ENCODE measurements at regions of chr3 and their contacts with region 1.

Region 1: GRCh38 chr3:50337191-50337841 is 3.3 kb downstream of the RASSF1 start:
- DNase-seq: peak; percentile 98 to 99 (median 98)
- H3K4me3 ChIP-seq: peak overlapping the region; percentile 50 to 94 (median 83)
- H3K4me3 Mint-ChIP-seq: peak overlapping the region; percentile 79 to 96
- H3K27ac ChIP-seq: peak overlapping the region; percentile 91 to 98
- H3K27ac Mint-ChIP-seq: peak overlapping the region; percentile 92 to 99 (median 96)
- H3K4me1 ChIP-seq: peaks cover 71 to 76% of the 10 kb centered on the region in 2 donors
- H3K4me1 Mint-ChIP-seq: peaks cover 62% of the 10 kb centered on the region
- H3K27me3 ChIP-seq: no peaks in the 10 kb centered on the region
- H3K27me3 Mint-ChIP-seq: no peaks in the 10 kb centered on the region
- CTCF ChIP-seq: no peak

Region 2: DNA sequence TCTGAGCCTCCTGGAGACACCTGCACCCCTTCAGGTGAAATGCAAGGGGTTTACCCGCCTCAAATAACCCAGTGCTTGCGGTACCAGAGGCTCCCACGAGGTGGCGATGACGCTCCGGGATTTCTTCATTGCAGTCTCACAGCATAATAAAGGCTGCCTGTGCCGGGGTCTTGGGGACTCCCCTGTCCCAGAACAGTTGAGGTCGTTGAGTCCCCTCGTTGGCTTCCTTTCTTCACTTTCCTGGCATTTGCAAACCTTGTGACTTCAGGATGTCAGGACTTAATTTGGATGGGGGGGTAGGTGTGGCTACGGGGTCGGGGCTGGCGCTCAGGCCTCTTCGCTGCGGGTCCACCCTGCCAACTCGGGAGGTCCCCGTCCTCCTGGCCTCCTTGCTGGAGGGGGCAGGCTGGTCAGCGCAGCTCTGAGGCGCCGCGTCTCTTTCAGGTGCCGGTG is 144.6 kb before region 1 on chr3:
- intact Hi-C with region 1: no loop called
- DNase-seq: peak; percentile 44 to 70 (median 62)
- H3K4me3 ChIP-seq: no peak overlapping the region
- H3K4me3 Mint-ChIP-seq: peak overlapping the region in 1 of 2 donors; percentile 55
- H3K27ac ChIP-seq: no peak overlapping the region
- H3K27ac Mint-ChIP-seq: peak overlapping the region in 1 of 7 donors; percentile 50
- H3K4me1 ChIP-seq: peaks cover 25 to 37% of the 10 kb centered on the region in 2 donors
- H3K4me1 Mint-ChIP-seq: peaks cover 27% of the 10 kb centered on the region
- H3K27me3 ChIP-seq: peaks cover 15 to 37% of the 10 kb centered on the region in 2 donors
- H3K27me3 Mint-ChIP-seq: peaks cover 36 to 47% (median 44%) of the 10 kb centered on the region in 3 donors
- CTCF ChIP-seq: peak; percentile 97

Region 3: GRCh38 chr3:50298836-50299637 is 38.3 kb before region 1 on chr3 and contains the starts of genes HYAL3 and NAA80:
- intact Hi-C with region 1: loop called (anchors 5 kb)
- DNase-seq: peak; percentile 98 to 100 (median 100)
- H3K4me3 ChIP-seq: peak within 1 kb of the TSS; percentile 40 to 94 (median 84)
- H3K4me3 Mint-ChIP-seq: peak within 1 kb of the TSS; percentile 90 to 95
- H3K27ac ChIP-seq: peak within 1 kb of the TSS; percentile 99 to 100
- H3K27ac Mint-ChIP-seq: peak within 1 kb of the TSS; percentile 99
- H3K4me1 ChIP-seq: peaks cover 32 to 37% of the 10 kb centered on the region in 2 donors
- H3K4me1 Mint-ChIP-seq: peaks cover 34% of the 10 kb centered on the region
- H3K27me3 ChIP-seq: no peaks in the 10 kb centered on the region
- H3K27me3 Mint-ChIP-seq: no peaks in the 10 kb centered on the region
- CTCF ChIP-seq: peak; percentile 63
- polyA plus RNA-seq, gene HYAL3: 3.4 to 5.8 (median 4.9) TPM
- polyA plus RNA-seq, gene NAA80: 2.3 to 21.3 (median 4.6) TPM

Region 4: GRCh38 chr3:50350527-50351322 is 13.4 kb after region 1 on chr3 and contains the starts of genes CYB561D2 and NPRL2:
- intact Hi-C with region 1: no loop called
- DNase-seq: peak; percentile 95 to 97 (median 96)
- H3K4me3 ChIP-seq: peak within 1 kb of the TSS; percentile 79 to 93 (median 85)
- H3K4me3 Mint-ChIP-seq: peak within 1 kb of the TSS; percentile 92 to 95
- H3K27ac ChIP-seq: peak within 1 kb of the TSS; percentile 85 to 94
- H3K27ac Mint-ChIP-seq: peak within 1 kb of the TSS; percentile 95 to 99 (median 97)
- H3K4me1 ChIP-seq: peaks cover 42 to 58% of the 10 kb centered on the region in 2 donors
- H3K4me1 Mint-ChIP-seq: peaks cover 59% of the 10 kb centered on the region
- H3K27me3 ChIP-seq: no peaks in the 10 kb centered on the region
- H3K27me3 Mint-ChIP-seq: no peaks in the 10 kb centered on the region
- CTCF ChIP-seq: no peak
- polyA plus RNA-seq, gene CYB561D2: 78.9 to 94.0 (median 82.5) TPM
- polyA plus RNA-seq, gene NPRL2: 20.9 to 37.9 (median 23.5) TPM